Panc1 (cell line): ENCODE measurements at regions of chr3 and their contacts with region 1.

Region 1: DNA sequence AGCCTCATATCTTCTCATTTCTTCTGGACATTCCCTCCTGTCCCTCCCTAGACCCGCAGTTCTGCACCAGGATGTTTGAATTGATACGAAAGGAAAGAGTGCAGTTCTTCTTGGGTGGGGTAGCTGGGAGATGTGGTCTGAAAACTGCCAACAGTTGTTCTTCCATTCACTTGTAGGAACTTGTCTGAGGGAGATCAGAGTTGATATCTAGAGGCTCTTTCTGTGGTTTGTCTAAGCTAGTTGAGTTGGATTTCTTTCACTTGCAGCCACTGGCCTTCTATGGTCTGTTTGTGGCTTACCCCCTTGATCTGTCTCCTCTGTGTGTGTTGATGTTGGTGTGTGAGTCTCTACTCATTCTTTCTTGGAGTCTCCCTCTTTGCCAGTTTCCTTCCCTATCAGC is 42.5 kb upstream of the PIK3CB start:
- DNase-seq: no peak
- ATAC-seq: no peak
- H3K4me3 ChIP-seq: no peak overlapping the region
- H3K27ac ChIP-seq: no peak overlapping the region
- H3K4me1 ChIP-seq: no peaks in the 10 kb centered on the region
- H3K27me3 ChIP-seq: no peaks in the 10 kb centered on the region
- CTCF ChIP-seq: no peak

Region 2: GRCh38 chr3:138578141-138578540 is 299.1 kb before region 1 on chr3:
- CTCF ChIA-PET with region 1: interaction called, 11 read pairs
- POLR2A ChIA-PET with region 1: no interaction called
- in situ Hi-C with region 1: no loop called
- intact Hi-C with region 1: no loop called
- DNase-seq: no peak
- ATAC-seq: no peak
- H3K4me3 ChIP-seq: no peak overlapping the region
- H3K27ac ChIP-seq: peak overlapping the region; percentile 59
- H3K4me1 ChIP-seq: peaks cover 12% of the 10 kb centered on the region
- H3K27me3 ChIP-seq: no peaks in the 10 kb centered on the region
- CTCF ChIP-seq: no peak

Region 3: GRCh38 chr3:138686771-138687221 is 190.4 kb before region 1 on chr3:
- CTCF ChIA-PET with region 1: no interaction called
- POLR2A ChIA-PET with region 1: no interaction called
- in situ Hi-C with region 1: no loop called
- intact Hi-C with region 1: no loop called
- DNase-seq: no peak
- ATAC-seq: peak; percentile 92
- H3K4me3 ChIP-seq: no peak overlapping the region
- H3K27ac ChIP-seq: peak overlapping the region; percentile 84
- H3K4me1 ChIP-seq: peaks cover 29% of the 10 kb centered on the region
- H3K27me3 ChIP-seq: no peaks in the 10 kb centered on the region
- CTCF ChIP-seq: no peak

Region 4: DNA sequence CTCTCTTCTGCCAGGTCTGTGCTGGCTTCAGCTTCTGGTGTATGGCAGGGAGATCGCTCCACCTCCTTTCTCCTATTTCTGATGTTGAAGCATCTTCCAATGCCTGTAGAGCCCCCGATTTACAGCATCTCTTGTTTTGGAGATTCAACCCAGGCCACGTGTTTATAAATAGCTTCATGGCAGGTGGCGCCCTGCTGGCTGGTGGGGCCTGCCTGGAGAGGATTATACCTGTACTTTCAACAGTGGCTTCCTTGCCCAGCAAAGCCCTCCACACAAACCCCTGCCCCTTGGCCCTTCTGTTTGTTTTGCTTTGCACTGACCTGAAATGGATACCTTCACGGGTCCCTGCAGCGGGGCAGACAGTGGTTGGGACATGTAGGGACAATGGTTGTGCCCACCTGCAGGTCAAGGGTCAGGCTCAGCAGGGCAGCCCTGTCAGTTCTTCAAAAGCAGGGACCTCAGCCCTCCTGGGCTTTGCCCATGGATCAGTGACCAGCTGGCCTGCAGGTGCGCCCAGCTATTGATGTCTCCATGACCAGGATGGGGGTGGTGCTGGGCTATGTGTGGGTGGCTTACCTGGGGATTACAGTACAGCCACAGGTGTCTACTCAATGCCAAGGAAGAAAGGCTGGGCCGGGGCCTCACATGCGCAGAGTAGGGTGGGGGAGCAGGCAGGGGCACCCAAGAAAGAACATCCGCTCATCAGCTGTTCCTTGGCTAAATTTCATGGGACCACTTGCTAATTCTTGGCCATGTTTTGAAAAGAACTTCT is 280.1 kb after region 1 on chr3:
- CTCF ChIA-PET with region 1: no interaction called
- POLR2A ChIA-PET with region 1: interaction called, 10 read pairs
- in situ Hi-C with region 1: no loop called
- intact Hi-C with region 1: no loop called
- DNase-seq: no peak
- ATAC-seq: no peak
- H3K4me3 ChIP-seq: no peak overlapping the region
- H3K27ac ChIP-seq: no peak overlapping the region
- H3K4me1 ChIP-seq: no peaks in the 10 kb centered on the region
- H3K27me3 ChIP-seq: no peaks in the 10 kb centered on the region; the same call in 1 of the 2 replicates
- CTCF ChIP-seq: no peak